T-cell (primary cell): ENCODE measurements at regions of chr12 and their contacts with region 1.

Region 1: GRCh38 chr12:108633534-108634248 is at the start of gene SELPLG:
- DNase-seq: peak; percentile 78 to 95 (median 90)
- ATAC-seq: peak; percentile 78 to 82 (median 79)
- H3K4me3 ChIP-seq: peak within 1 kb of the TSS; percentile 93 to 94
- H3K4me3 Mint-ChIP-seq: peak within 1 kb of the TSS; percentile 100
- H3K27ac ChIP-seq: peak within 1 kb of the TSS; percentile 94
- H3K27ac Mint-ChIP-seq: peak within 1 kb of the TSS; percentile 99 to 100
- H3K4me1 ChIP-seq: peaks cover 38 to 77% of the 10 kb centered on the region in 2 experiments
- H3K4me1 Mint-ChIP-seq: peaks cover 68 to 75% (median 69%) of the 10 kb centered on the region in 3 donors
- H3K27me3 ChIP-seq: no peaks in the 10 kb centered on the region
- H3K27me3 Mint-ChIP-seq: no peaks in the 10 kb centered on the region
- total RNA-seq, gene SELPLG: 102 to 220 (median 215) TPM

Region 2: GRCh38 chr12:108568338-108569154 is 65.1 kb before region 1 on chr12:
- CTCF ChIA-PET with region 1: interaction called in 1 of 2 experiments, 11 read pairs
- POLR2A ChIA-PET with region 1: interaction called in 1 of 2 experiments, 12 read pairs
- DNase-seq: peak; percentile 20 to 90 (median 76)
- ATAC-seq: peak; percentile 94 to 98 (median 95)
- H3K4me3 ChIP-seq: no peak overlapping the region
- H3K4me3 Mint-ChIP-seq: peak overlapping the region; percentile 51 to 81 (median 51)
- H3K27ac ChIP-seq: peak overlapping the region; percentile 82
- H3K27ac Mint-ChIP-seq: peak overlapping the region; percentile 95 to 98
- H3K4me1 ChIP-seq: peaks cover 38 to 60% of the 10 kb centered on the region in 2 experiments
- H3K4me1 Mint-ChIP-seq: peaks cover 70 to 92% (median 88%) of the 10 kb centered on the region in 3 donors
- H3K27me3 ChIP-seq: no peaks in the 10 kb centered on the region
- H3K27me3 Mint-ChIP-seq: no peaks in the 10 kb centered on the region

Region 3: DNA sequence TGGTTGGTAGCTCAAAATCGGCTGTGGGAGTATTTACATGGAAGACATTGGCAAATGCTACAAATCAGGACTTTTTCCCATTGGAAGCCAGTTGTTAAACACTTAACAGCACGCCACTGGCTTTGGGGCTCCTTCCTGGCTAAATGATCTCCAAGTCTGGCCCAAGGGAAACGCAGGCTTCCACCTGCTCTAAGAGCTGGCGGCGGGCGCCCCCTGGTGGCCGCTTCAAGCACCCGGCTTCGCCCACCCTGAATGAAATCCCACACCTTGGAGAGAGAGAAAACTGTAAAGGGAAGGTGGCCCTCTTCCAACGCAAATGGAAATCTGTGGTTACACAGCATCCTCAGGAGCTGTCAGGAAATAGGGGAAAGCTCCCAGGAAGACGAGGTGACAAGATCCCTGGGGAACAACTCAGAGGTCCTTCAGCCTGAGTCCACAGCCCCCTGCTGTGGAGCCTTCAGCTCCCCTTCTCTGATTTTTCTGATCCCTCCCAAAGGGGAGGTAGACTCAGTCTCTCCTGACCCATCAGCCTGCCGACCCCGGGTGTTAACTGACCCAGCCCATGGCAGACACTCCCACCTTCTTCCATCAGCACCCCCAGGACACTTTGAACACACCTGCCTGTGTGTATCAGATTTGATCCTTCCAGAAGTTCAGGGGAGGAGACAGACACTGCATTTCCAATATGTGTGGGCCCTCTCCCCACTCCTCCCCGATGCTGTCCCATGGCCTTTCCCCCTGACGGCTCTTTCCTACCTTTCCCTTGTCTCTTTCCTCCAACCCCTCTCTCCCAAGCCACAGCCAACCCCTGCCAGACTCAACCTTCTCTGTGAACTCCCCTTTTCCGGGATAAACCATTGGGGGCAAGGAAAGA is 15.4 kb before region 1 on chr12:
- CTCF ChIA-PET with region 1: interaction called, 13 to 112 read pairs
- POLR2A ChIA-PET with region 1: interaction called, 7 to 13 read pairs
- DNase-seq: peak in 34 of 35 experiments; percentile 49 to 89 (median 70)
- ATAC-seq: peak; percentile 57 to 69 (median 62)
- H3K4me3 ChIP-seq: no peak overlapping the region
- H3K4me3 Mint-ChIP-seq: peak overlapping the region in 2 of 3 donors; percentile 2 to 69
- H3K27ac ChIP-seq: peak overlapping the region; percentile 86
- H3K27ac Mint-ChIP-seq: peak overlapping the region; percentile 86 to 87
- H3K4me1 ChIP-seq: peaks cover 22 to 53% of the 10 kb centered on the region in 2 experiments
- H3K4me1 Mint-ChIP-seq: peaks cover 62 to 84% (median 66%) of the 10 kb centered on the region in 3 donors
- H3K27me3 ChIP-seq: no peaks in the 10 kb centered on the region
- H3K27me3 Mint-ChIP-seq: no peaks in the 10 kb centered on the region

Region 4: GRCh38 chr12:108646600-108647579 is 13.2 kb after region 1 on chr12:
- CTCF ChIA-PET with region 1: interaction called, 4 to 20 read pairs
- POLR2A ChIA-PET with region 1: no interaction called
- DNase-seq: peak in 1 of 35 experiments; percentile 38
- ATAC-seq: peak in 3 of 4 experiments; percentile 29 to 53 (median 36)
- H3K4me3 ChIP-seq: no peak overlapping the region
- H3K4me3 Mint-ChIP-seq: peak overlapping the region; percentile 18 to 70 (median 66)
- H3K27ac ChIP-seq: peak overlapping the region; percentile 38
- H3K27ac Mint-ChIP-seq: peak overlapping the region; percentile 86 to 91
- H3K4me1 ChIP-seq: peaks cover 15 to 30% of the 10 kb centered on the region in 2 experiments
- H3K4me1 Mint-ChIP-seq: peaks cover 27 to 37% (median 34%) of the 10 kb centered on the region in 3 donors
- H3K27me3 ChIP-seq: no peaks in the 10 kb centered on the region
- H3K27me3 Mint-ChIP-seq: no peaks in the 10 kb centered on the region

Region 5: DNA sequence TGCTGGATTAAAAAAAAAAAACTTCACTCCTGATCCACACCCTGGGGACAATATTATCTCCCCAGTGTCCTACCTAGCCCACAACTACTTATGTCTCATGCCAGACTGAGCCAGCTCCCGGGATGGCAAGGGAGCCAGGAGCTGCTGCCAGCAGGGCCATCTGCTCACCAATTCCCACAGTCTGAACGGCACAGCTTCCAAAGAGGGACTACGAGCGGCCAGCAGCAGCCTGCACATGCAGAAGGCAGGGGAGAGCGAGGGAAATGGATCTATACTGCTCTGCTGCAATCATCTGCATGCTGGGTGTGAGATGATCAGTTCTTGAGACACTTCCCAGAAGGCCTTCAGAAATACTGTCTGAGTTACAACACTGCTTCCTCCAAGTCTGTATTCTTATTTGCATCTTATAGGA is 212.6 kb after region 1 on chr12:
- CTCF ChIA-PET with region 1: no interaction called
- POLR2A ChIA-PET with region 1: interaction called in 1 of 2 experiments, 20 read pairs
- DNase-seq: no peak
- ATAC-seq: no peak
- H3K4me3 ChIP-seq: no peak overlapping the region
- H3K4me3 Mint-ChIP-seq: no peak overlapping the region
- H3K27ac ChIP-seq: no peak overlapping the region
- H3K27ac Mint-ChIP-seq: no peak overlapping the region
- H3K4me1 ChIP-seq: no peaks in the 10 kb centered on the region
- H3K4me1 Mint-ChIP-seq: peaks cover 0 to 5% (median 4%) of the 10 kb centered on the region in 3 donors
- H3K27me3 ChIP-seq: no peaks in the 10 kb centered on the region
- H3K27me3 Mint-ChIP-seq: no peaks in the 10 kb centered on the region